Activated naive CD8-positive, alpha-beta T cell treated with anti-CD3 and anti-CD28 coated beads, Interleukin-2, amount 10 ng/mL, durations not matched to agents 7 days and 5 days (primary cell): ENCODE measurements at regions of chr19 and their contacts with region 1.

Region 1: DNA sequence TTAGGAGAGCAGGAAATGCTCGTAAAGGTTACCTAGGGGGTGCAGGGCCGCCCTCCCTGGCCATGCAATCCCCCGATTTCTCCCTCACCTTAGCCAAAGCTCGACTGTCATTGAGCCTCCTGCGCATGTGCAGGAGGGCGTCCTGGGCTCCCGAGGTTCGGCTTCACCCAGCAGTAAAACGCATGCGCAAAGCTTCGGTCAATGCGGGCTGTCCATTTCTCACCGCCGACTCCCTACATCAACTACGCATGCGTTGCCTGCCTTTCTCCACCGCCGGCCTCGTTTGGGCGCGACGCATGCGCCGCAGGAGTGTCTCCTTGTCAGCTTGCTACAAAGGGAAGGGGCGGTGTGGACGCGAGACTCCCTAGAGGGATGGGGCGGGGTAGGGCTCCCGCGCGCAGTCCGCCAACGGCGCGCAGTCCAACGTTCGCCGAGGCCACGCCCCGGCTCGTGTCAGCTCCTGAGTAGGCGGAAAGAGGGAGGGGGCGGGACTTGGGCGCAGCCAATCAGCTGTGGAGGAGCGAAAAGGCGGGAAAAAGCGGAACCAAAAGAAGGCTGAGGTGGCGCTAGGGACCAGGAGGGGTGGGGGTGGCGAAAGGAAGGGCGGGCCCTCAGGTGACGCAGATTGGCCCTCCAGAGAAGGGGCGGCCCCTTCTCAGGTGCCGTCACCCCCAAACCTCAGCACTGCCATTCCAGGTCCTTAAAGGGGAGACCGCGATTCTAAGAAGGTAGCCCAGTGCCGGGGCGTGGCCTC is at the starts of genes SYNGR4 and TMEM143:
- DNase-seq: peak; percentile 97
- ATAC-seq: peak; percentile 89
- H3K4me3 Mint-ChIP-seq: peak within 1 kb of the TSS; percentile 90
- H3K27ac Mint-ChIP-seq: peak within 1 kb of the TSS; percentile 97
- H3K4me1 Mint-ChIP-seq: peaks cover 17% of the 10 kb centered on the region
- H3K27me3 Mint-ChIP-seq: no peaks in the 10 kb centered on the region
- total RNA-seq, gene SYNGR4: 0.30 TPM in 1 of 2 experiments, not detected in the other
- total RNA-seq, gene TMEM143: 24.8 to 26.1 TPM

Region 2: GRCh38 chr19:48321622-48322591 is 42.1 kb before region 1 on chr19:
- POLR2A ChIA-PET with region 1: interaction called, 40 read pairs
- DNase-seq: peak; percentile 100
- ATAC-seq: peak; percentile 71
- H3K4me3 Mint-ChIP-seq: peak overlapping the region; percentile 97
- H3K27ac Mint-ChIP-seq: peak overlapping the region; percentile 100
- H3K4me1 Mint-ChIP-seq: peaks cover 49% of the 10 kb centered on the region
- H3K27me3 Mint-ChIP-seq: no peaks in the 10 kb centered on the region

Region 3: GRCh38 chr19:48333467-48334384 is 30.3 kb before region 1 on chr19:
- POLR2A ChIA-PET with region 1: interaction called, 21 read pairs
- DNase-seq: peak; percentile 97
- ATAC-seq: peak; percentile 69
- H3K4me3 Mint-ChIP-seq: peak overlapping the region; percentile 88
- H3K27ac Mint-ChIP-seq: peak overlapping the region; percentile 93
- H3K4me1 Mint-ChIP-seq: peaks cover 37% of the 10 kb centered on the region
- H3K27me3 Mint-ChIP-seq: no peaks in the 10 kb centered on the region

Region 4: GRCh38 chr19:48391107-48391986 is 27.4 kb after region 1 on chr19 and contains the start of gene KDELR1:
- POLR2A ChIA-PET with region 1: interaction called, 25 read pairs
- DNase-seq: peak; percentile 91
- ATAC-seq: peak; percentile 62
- H3K4me3 Mint-ChIP-seq: peak within 1 kb of the TSS; percentile 97
- H3K27ac Mint-ChIP-seq: peak within 1 kb of the TSS; percentile 95
- H3K4me1 Mint-ChIP-seq: peaks cover 19% of the 10 kb centered on the region
- H3K27me3 Mint-ChIP-seq: peaks cover 35% of the 10 kb centered on the region
- total RNA-seq, gene KDELR1: 75.8 to 75.9 TPM

Region 5: GRCh38 chr19:48498912-48499311 is 134.9 kb after region 1 on chr19:
- POLR2A ChIA-PET with region 1: no interaction called
- DNase-seq: no peak
- ATAC-seq: no peak
- H3K4me3 Mint-ChIP-seq: no peak overlapping the region
- H3K27ac Mint-ChIP-seq: no peak overlapping the region
- H3K4me1 Mint-ChIP-seq: peaks cover 25% of the 10 kb centered on the region
- H3K27me3 Mint-ChIP-seq: peaks cover 15% of the 10 kb centered on the region

Region 6: DNA sequence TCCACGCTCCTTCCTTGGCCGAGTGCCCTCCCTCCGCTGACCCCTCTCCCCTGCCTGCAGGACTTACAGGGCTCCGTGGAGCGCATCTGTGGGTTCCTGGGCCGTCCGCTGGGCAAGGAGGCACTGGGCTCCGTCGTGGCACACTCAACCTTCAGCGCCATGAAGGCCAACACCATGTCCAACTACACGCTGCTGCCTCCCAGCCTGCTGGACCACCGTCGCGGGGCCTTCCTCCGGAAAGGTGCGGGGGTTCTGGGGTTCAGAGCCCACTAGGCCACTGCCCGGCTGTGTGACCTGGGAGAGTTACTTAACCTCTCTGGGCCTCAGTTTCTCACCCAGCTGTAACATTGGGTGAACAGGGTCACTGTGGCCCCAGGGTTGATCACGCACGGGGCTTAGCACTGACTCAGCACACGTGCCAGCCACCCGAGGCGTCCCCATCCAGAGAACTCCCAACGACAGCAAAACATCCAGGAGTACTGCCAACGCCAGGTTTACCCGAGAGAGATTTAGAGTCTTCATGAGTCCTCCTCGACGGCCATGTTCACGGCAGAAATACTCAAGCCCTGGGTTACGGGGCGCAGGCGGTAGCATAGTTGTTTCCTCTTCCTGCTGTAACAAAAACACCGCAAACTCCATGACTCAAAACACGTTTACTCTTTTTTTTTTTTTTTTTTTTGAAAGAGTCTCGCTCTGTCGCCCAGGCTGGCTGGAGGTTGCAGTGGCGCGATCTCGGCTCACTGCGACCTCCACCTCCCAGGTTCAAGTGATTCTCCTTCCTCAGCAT is 232.9 kb after region 1 on chr19:
- POLR2A ChIA-PET with region 1: no interaction called
- DNase-seq: no peak
- ATAC-seq: peak; percentile 60
- H3K4me3 Mint-ChIP-seq: peak overlapping the region; percentile 76
- H3K27ac Mint-ChIP-seq: peak overlapping the region; percentile 19
- H3K4me1 Mint-ChIP-seq: peaks cover 2% of the 10 kb centered on the region
- H3K27me3 Mint-ChIP-seq: peaks cover 2% of the 10 kb centered on the region